HEK293 (cell line): ENCODE measurements at regions of chr19 and their contacts with region 1.

Region 1: DNA sequence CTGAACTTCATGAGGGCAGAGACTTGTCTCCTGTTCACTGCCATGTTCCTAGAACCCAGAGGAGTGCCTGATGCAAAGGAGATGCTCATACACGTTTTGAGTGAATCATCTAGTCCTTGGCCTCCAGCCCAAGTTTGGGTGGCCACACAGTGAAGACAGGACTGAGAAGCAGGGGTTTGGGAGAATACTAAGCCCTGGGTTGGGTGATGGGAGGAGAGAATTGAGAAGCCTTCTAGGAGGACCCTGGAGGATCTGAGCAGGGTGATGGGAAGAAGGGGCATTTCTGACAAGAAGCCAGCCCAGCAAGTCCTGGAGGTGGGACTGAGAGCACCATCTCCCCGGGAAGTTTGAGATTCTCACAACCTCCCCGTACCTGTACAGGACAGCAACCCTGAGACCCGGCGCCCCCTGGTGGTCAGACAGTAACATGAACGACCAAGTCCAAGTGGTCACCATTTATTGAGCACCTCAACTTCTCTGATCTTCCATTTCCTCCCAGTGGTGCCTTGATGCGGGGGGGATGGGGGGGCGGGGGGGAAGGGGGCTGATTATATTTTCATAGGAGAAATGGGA is 11.0 kb downstream of the CTU1 start:
- H3K4me3 ChIP-seq: no peak overlapping the region
- H3K27ac ChIP-seq: no peak overlapping the region
- H3K4me1 ChIP-seq: peaks cover 13% of the 10 kb centered on the region
- CTCF ChIP-seq: peak; percentile 53

Region 2: DNA sequence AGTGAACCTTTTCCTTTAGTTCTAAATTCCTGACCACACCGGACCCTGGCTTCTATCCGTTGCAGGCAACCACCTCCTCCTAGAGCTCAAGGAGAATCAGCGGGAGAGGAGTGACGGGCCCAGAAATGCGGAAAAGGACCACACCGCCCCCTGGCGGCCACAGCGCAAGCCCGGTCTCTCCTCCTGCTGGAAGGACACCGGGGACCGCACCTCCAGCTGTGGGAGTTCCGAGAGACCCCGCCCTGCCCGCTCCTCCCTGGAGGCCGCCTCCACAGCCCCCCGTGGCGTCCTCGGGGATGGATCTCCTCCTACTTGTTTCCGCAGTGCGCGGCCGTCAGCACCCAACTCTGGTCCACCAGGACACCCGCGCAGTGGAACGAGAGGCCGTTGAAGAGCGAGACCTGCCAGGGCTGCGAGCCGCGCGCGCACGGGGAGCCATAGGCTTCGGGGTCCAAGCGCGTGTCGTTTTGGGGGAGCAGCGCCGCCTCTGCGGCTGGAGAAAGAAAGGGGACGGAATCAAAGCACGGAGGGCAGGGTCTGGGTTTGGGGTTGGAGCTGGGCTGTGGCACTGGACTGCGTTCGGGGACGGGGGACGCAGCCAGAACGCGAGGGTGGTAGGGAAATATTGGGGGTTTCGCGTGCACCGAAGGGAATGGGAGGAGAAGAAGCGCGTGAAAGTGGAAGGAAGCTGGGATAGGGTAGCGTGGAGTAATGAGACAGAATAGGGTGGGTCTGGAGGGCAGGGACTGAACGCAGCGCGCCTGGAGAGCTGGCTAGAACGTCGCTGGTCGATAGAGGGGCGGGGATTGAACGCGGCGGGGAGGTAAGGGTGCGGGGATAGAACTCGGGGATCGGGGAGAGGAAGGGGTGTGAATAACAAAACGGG is 80.2 kb before region 1 on chr19:
- CTCF ChIA-PET with region 1: interaction called, 177 read pairs
- POLR2A ChIA-PET with region 1: interaction called, 4 read pairs
- H3K4me3 ChIP-seq: peak overlapping the region; percentile 48
- H3K27ac ChIP-seq: no peak overlapping the region
- H3K4me1 ChIP-seq: no peaks in the 10 kb centered on the region; the same call in 1 of the 2 replicates
- CTCF ChIP-seq: peak; percentile 96

Region 3: GRCh38 chr19:51063664-51064063 is 33.6 kb before region 1 on chr19:
- CTCF ChIA-PET with region 1: interaction called, 10 read pairs
- POLR2A ChIA-PET with region 1: no interaction called
- H3K4me3 ChIP-seq: no peak overlapping the region
- H3K27ac ChIP-seq: no peak overlapping the region
- H3K4me1 ChIP-seq: no peaks in the 10 kb centered on the region
- CTCF ChIP-seq: no peak

Region 4: GRCh38 chr19:51108066-51108804 is 11.0 kb after region 1 on chr19 and contains the start of gene CTU1:
- CTCF ChIA-PET with region 1: interaction called, 12 read pairs
- POLR2A ChIA-PET with region 1: no interaction called
- H3K4me3 ChIP-seq: peak within 1 kb of the TSS; percentile 88
- H3K27ac ChIP-seq: no peak within 1 kb of the TSS; the same call in 1 of the 2 replicates
- H3K4me1 ChIP-seq: no peaks in the 10 kb centered on the region
- CTCF ChIP-seq: no peak